GM10248 (cell line): ENCODE measurements at regions of chr17 and their contacts with region 1.

Region 1: DNA sequence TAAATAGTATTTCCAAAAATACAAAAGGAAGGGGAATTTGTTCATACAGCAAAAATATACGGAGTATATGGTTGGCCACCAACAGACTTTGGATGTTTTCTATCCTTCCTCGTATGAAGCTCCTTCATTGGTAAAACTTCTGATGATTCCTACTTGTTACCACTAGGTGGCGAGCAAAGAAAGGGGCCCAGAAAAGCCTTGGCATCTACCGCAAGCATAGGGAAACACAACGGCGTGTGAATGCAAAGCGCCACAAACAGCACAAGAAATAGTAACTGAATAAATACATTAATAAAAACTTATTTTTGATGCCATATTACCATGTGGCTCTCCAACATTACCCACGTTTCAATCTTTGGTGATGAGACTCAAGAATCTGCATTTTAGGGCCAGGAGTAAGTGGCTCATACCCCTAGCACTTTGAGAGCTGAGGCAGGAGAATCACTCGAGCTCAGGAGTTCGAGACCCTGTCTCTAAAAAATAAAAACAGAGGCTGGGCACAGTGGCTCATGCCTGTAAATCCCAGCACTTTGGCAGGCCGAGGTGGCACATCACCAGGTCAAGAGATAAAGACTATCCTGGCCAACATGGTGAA is 34.5 kb downstream of the YWHAE start:
- DNase-seq: peak; percentile 74
- CTCF ChIP-seq: peak; percentile 67

Region 2: DNA sequence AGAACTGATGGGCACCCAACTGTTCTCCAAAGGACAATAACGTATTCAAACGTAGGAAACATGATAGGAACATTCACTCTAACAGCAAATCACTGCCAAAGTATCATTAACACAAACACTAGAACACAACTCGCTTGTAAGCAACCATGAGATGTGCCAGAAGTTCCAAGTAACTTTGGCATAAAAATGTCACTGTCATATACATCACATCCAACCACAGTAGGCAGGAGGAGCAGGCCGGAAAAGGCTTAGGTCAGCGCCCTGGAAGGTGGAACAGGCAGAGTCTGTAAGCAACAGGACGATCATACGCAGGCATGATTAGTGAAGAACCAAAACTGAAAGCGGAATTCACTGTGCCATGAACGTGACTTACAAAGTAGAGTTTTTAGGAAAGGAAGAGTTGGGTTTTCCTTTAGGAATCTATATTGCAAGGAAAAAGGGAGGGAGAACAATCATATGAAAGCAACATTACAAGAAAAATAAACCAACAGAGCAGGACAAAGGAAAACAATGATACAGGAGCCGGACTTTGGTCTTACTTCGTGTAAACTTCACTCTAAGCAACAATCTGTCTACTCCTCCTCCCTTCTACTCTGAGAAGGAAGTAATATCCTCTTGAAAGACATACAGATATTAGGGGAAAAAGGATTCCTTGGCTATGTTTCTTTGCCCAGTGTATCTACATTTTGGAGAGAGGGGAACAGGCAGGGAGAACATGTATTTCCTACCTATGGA is 17.8 kb before region 1 on chr17:
- CTCF ChIA-PET with region 1: interaction called, 54 read pairs
- POLR2A ChIA-PET with region 1: interaction called, 3 read pairs
- DNase-seq: no peak
- CTCF ChIP-seq: no peak

Region 3: GRCh38 chr17:1399679-1400512 is 34.4 kb after region 1 on chr17 and contains the start of gene YWHAE:
- CTCF ChIA-PET with region 1: interaction called, 13 read pairs
- POLR2A ChIA-PET with region 1: interaction called, 5 read pairs
- DNase-seq: peak; percentile 96
- CTCF ChIP-seq: no peak

Region 4: DNA sequence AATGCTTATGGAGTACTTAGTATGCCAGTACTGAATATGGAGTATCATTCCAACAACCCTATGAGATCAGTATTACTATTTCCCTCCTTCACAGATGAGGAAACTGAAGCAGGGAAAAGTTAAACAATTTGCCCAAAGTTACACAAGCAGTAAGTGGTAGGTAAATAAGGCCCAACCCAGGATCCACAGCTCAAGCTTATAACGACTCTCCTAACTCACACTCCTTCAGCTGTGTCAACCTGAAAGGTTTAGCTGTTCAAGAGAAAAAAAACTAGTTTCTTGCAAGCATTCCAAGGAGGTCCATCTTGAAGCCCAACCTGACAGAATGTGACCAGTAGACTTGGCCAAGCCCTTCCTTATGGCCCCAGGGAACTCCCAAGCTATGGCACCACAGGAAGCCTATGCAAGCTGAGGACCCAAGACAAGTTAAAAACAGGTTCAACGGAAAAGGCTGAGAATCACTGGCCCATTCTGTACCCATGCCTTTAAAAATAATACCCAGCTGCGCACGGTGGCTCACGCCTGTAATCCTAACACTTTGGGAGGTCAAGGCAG is 84.0 kb after region 1 on chr17:
- CTCF ChIA-PET with region 1: interaction called, 12 read pairs
- POLR2A ChIA-PET with region 1: no interaction called
- DNase-seq: no peak
- CTCF ChIP-seq: no peak

Region 5: DNA sequence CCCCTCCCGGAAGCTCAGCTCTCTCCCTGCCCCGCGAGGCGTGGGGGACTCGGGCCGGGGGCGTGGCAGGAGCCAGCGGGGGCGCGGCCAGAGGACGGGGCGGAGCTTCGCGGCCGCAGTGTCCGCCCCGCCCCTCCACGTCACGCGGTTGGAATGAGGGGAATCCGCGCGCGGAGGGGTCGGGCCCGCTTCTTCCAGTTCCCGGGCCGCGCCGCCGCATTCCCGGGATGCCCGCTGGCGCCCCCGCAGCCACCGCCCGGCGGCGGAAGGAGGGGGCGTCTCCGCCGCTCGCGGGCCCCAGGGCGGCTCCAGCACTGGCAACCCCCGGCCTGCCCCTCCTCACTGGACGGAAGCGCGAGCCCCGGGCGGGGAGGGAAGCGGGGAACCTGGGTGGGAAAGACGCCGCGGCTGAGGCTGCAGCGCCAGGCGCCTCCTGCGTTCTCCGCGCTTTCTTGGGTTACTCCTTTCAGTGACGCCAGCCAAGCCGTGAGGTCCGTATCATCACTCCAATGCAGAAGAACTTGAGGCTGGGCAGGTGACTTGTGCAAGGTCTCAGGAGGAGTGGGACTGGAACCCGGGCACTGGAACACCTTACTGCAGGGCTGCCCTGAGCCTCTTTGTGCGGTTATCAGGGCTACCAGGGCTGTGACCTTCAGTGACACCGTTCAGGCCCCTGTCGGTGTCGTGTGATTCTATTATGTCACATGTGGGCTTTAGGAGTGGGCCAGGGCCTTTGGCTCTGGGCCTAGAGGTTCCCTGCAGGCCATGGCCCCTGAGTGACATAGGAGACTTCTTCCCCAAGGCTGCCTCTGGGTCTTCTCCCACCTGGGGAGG is 122.7 kb after region 1 on chr17:
- CTCF ChIA-PET with region 1: interaction called, 13 read pairs
- POLR2A ChIA-PET with region 1: no interaction called
- DNase-seq: peak; percentile 85
- CTCF ChIP-seq: no peak

Region 6: DNA sequence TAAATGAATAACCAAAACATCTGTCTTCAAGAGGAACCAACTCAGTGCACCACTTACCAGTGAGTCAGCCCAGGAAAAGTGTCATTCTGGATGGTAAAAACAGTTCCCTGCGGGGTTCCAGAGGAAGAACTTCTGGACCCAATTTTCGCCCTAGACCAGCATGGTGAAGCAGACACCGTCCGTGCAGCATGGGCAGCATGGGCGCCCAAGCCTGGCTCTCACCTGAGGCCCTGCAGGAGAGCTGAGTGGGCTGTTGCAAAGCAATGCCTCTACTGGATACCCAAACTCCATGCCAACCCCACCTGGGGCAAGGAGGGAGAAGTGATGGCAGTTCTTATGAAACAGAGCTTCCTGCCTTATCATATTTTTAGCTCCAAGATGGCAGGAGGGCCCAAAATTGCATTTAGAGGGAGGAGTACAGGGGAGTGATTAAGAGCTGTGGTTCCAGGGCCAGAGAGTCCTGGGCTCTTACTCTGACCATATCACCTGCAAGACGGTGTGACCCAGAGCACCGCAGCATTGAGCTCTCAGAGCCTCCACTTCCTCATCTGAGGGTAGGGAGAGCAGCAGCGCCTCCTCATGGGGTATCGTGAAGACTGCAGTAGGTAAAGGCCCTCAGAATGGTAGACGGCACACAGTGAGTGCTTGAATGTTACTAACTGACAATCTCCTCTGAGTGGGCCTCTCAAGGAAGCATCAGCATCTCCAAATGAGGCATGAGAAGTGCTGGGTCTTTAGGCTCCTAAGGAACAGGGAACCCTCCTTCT is 167.5 kb after region 1 on chr17:
- CTCF ChIA-PET with region 1: interaction called, 20 read pairs
- POLR2A ChIA-PET with region 1: no interaction called
- DNase-seq: peak; percentile 42
- CTCF ChIP-seq: peak; percentile 38